ENCODE measurements at regions of chr1 and their contacts with region 1.

Region 1: GRCh38 chr1:56578963-56579875 is at the start of gene PLPP3:
- DNase-seq: peak; percentile 89 to 96 (median 94)
- ATAC-seq: peak; percentile 89
- H3K4me3 ChIP-seq: peak within 1 kb of the TSS; percentile 84 to 87
- H3K27ac ChIP-seq: peak within 1 kb of the TSS; percentile 91 to 94
- H3K4me1 ChIP-seq: peaks cover 4 to 46% of the 10 kb centered on the region in 2 donors
- H3K27me3 ChIP-seq: peaks cover 0 to 3% of the 10 kb centered on the region in 2 donors
- CTCF ChIP-seq: peak; percentile 27 to 52
- polyA plus RNA-seq, gene PLPP3: 105 to 145 (median 118) TPM

Region 2: GRCh38 chr1:56411484-56412180 is 167.6 kb before region 1 on chr1:
- intact Hi-C with region 1: loop called in 1 of 2 experiments (anchors 10 kb)
- DNase-seq: no peak
- ATAC-seq: no peak
- H3K4me3 ChIP-seq: no peak overlapping the region
- H3K27ac ChIP-seq: peak overlapping the region; percentile 5 to 55
- H3K4me1 ChIP-seq: peaks cover 0 to 3% of the 10 kb centered on the region in 2 donors
- H3K27me3 ChIP-seq: no peaks in the 10 kb centered on the region
- CTCF ChIP-seq: no peak

Region 3: GRCh38 chr1:56508523-56508983 is 70.7 kb before region 1 on chr1:
- intact Hi-C with region 1: loop called in 1 of 2 experiments (anchors 10 kb)
- DNase-seq: peak in 2 of 4 donors; percentile 78 to 82
- ATAC-seq: peak; percentile 37
- H3K4me3 ChIP-seq: no peak overlapping the region
- H3K27ac ChIP-seq: peak overlapping the region in 1 of 2 donors; percentile 79
- H3K4me1 ChIP-seq: peaks cover 4 to 86% of the 10 kb centered on the region in 2 donors
- H3K27me3 ChIP-seq: no peaks in the 10 kb centered on the region
- CTCF ChIP-seq: no peak

Region 4: DNA sequence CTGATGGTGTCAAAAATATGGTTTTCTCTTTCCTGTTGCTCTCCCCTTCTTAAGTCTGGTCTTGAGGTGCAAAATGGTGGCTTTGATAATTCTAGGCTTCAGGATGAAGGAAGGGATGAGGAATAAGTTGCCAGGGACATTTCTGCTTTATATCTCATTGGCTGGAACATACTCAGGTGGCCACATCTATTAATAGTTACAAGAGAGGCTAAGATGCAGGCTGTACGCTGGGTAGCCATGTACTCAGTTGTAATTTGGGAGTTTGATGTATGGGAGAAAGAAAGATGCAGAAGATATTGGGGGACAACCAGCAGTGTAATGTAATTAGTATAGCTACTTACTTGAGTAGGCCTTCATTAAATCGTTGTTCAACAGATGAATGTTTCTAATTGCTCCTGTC is 91.1 kb after region 1 on chr1:
- intact Hi-C with region 1: no loop called
- DNase-seq: no peak
- ATAC-seq: no peak
- H3K4me3 ChIP-seq: no peak overlapping the region
- H3K27ac ChIP-seq: no peak overlapping the region
- H3K4me1 ChIP-seq: no peaks in the 10 kb centered on the region
- H3K27me3 ChIP-seq: no peaks in the 10 kb centered on the region
- CTCF ChIP-seq: no peak

Region 5: DNA sequence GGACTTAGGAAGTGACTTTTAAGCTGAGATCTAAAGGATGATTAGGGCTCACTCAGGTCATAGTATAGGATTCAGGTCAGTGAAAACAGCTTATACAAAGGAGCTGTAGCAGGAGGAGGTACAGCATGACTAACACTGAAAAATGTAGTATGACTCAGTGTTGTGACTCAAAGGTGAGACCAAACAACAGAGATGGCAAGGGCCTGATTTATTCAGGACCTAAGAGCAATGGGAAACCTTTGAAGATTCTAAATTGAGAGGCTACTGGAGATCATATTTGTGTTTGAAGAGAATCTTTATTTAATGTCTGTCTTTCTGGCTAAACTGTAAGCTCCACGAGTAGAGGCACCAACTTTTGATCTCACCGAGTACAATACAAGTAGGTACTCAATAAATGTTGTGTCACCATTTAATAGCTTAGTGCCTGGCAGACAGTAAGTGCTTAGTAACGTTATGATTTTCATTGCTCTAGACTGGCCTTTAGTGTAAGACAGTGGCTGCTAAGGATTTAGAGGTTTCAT is 109.3 kb after region 1 on chr1:
- intact Hi-C with region 1: no loop called
- DNase-seq: no peak
- ATAC-seq: peak; percentile 98
- H3K4me3 ChIP-seq: no peak overlapping the region
- H3K27ac ChIP-seq: no peak overlapping the region
- H3K4me1 ChIP-seq: no peaks in the 10 kb centered on the region
- H3K27me3 ChIP-seq: no peaks in the 10 kb centered on the region
- CTCF ChIP-seq: no peak

Measured in left lung (tissue), 14 donors.